GM12878 (cell line): ENCODE measurements at regions of chr14 and their contacts with region 1.

Region 1: DNA sequence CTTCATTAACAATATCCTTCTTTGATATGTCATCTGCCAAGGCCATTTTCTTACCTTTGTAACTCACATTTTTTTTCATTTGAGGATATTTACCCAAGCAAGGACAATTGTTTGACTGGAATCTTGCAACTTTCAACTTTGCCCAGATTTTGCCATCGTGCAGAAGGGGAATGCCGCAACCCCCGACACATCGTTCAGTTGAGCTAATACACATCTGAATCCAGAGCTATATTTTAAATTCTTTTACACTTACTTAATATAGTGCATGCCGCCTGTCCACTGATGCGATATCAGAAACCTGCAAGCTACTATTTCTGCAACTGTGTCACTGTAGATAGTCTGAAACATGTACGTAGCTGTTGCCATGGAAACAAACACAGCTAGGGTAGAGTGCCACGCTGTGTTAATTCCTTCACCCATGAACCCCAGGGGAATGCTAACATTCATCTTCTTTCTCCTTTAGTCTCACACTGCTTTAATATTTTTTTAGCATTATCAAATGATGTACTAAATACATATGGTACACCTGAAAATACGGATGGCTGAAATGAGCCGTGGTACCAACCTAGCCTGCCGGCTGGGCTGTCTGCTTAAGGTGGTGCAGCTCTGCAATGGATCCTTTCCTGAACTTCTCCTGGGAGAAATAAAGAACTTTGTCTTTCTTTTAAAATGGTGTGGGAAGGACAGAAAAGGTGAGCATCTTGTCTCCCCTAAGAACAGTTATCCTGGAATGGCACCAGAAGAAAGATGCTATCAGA is 77.0 kb upstream of the FOXN3 start:
- DNase-seq: peak; percentile 47
- ATAC-seq: peak; percentile 98
- H3K4me3 ChIP-seq: 0 out of 2 replicates have a peak overlapping the region, but pooled peaks have one; percentile 13
- H3K27ac ChIP-seq: no peak overlapping the region
- H3K4me1 ChIP-seq: peaks cover 6% of the 10 kb centered on the region
- H3K27me3 ChIP-seq: no peaks in the 10 kb centered on the region
- CTCF ChIP-seq: no peak
- EP300 ChIP-seq: no peak; a peak in 1 of 4 replicates
- POLR2A ChIP-seq: no peak
- RAD21 ChIP-seq: 0 out of 2 replicates have a peak, but pooled peaks have one; percentile 2

Region 2: GRCh38 chr14:89401761-89402160 is 92.3 kb before region 1 on chr14:
- CTCF ChIA-PET with region 1: no interaction called
- POLR2A ChIA-PET with region 1: no interaction called
- RAD21 ChIA-PET with region 1: no interaction called
- SMC1A ChIA-PET with region 1: no interaction called
- in situ Hi-C with region 1: no loop called
- intact Hi-C with region 1: no loop called
- DNase-seq: no peak
- ATAC-seq: no peak
- H3K4me3 ChIP-seq: no peak overlapping the region
- H3K27ac ChIP-seq: no peak overlapping the region
- H3K4me1 ChIP-seq: no peaks in the 10 kb centered on the region
- H3K27me3 ChIP-seq: no peaks in the 10 kb centered on the region
- CTCF ChIP-seq: no peak
- EP300 ChIP-seq: no peak
- POLR2A ChIP-seq: no peak
- RAD21 ChIP-seq: no peak

Region 3: GRCh38 chr14:89504602-89505313 is 10.7 kb after region 1 on chr14:
- CTCF ChIA-PET with region 1: interaction called, 4 read pairs
- POLR2A ChIA-PET with region 1: no interaction called
- RAD21 ChIA-PET with region 1: interaction called, 3 read pairs
- SMC1A ChIA-PET with region 1: interaction called, 11 read pairs
- in situ Hi-C with region 1: no loop called
- intact Hi-C with region 1: no loop called
- DNase-seq: peak; percentile 33
- ATAC-seq: peak; percentile 63
- H3K4me3 ChIP-seq: peak overlapping the region; percentile 36; the same call in 1 of the 2 replicates
- H3K27ac ChIP-seq: no peak overlapping the region
- H3K4me1 ChIP-seq: peaks cover 37% of the 10 kb centered on the region
- H3K27me3 ChIP-seq: no peaks in the 10 kb centered on the region
- CTCF ChIP-seq: no peak
- EP300 ChIP-seq: no peak
- POLR2A ChIP-seq: no peak
- RAD21 ChIP-seq: no peak

Region 4: GRCh38 chr14:89701211-89702043 is 207.4 kb after region 1 on chr14:
- CTCF ChIA-PET with region 1: no interaction called
- POLR2A ChIA-PET with region 1: no interaction called
- RAD21 ChIA-PET with region 1: no interaction called
- SMC1A ChIA-PET with region 1: no interaction called
- in situ Hi-C with region 1: no loop called
- intact Hi-C with region 1: no loop called
- DNase-seq: no peak
- ATAC-seq: peak; percentile 91
- H3K4me3 ChIP-seq: peak overlapping the region; percentile 61; the same call in 1 of the 2 replicates
- H3K27ac ChIP-seq: no peak overlapping the region
- H3K4me1 ChIP-seq: no peaks in the 10 kb centered on the region; the same call in 1 of the 2 replicates
- H3K27me3 ChIP-seq: no peaks in the 10 kb centered on the region
- CTCF ChIP-seq: no peak
- EP300 ChIP-seq: no peak
- POLR2A ChIP-seq: peak; percentile 29; the same call in 1 of the 2 replicates
- RAD21 ChIP-seq: no peak